CD4-positive, alpha-beta memory T cell (primary cell): ENCODE measurements at regions of chr2 and their contacts with region 1.

Region 1: DNA sequence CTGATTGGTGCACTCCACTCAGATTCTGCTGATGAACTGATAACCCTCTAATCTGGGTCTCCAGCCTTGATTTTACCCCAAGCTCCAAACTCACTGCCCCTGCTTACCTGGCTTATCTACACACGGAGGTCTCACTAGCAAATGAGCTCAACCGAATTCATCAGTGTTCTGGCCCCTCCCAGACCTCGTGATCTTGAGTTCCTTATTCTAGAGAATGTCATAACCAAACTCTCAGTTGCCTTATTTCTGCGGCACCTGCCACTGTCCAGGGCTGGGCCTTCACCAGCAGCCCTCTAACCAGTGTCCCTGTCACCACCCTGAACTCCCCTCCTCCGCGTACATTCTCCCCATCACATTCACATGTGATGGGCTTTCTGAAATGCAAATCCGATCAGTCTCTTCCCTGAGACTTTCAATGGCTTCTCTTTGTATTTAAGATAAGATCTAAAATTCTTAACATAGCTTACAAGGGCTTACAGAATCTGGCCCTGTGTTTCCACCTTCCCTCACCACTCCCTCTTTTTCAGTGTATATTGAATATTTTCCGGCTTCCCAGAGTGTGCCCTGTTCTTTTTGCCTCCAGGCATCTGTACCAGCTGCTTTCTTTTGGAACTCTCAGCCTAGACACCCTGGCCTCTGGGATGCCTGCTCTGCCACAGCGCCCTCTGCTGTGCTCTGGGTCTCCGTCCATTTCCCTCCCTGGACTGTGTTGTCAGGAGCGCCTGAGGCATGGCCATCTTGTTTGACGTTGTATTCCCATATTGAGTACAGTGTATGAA is 31.1 kb downstream of the NAB1 start:
- DNase-seq: peak; percentile 49 to 70 (median 56)
- H3K4me3 ChIP-seq: no peak overlapping the region
- H3K4me3 Mint-ChIP-seq: peak overlapping the region in 5 of 8 donors; percentile 16 to 84 (median 36)
- H3K27ac ChIP-seq: no peak overlapping the region
- H3K27ac Mint-ChIP-seq: peak overlapping the region; percentile 19 to 94 (median 88)
- H3K4me1 ChIP-seq: peaks cover 42% of the 10 kb centered on the region
- H3K4me1 Mint-ChIP-seq: peaks cover 36 to 44% (median 40%) of the 10 kb centered on the region in 4 donors
- H3K27me3 ChIP-seq: no peaks in the 10 kb centered on the region
- H3K27me3 Mint-ChIP-seq: no peaks in the 10 kb centered on the region

Region 2: GRCh38 chr2:190088917-190089316 is 591.1 kb before region 1 on chr2:
- CTCF ChIA-PET with region 1: interaction called, 10 read pairs
- POLR2A ChIA-PET with region 1: interaction called, 3 read pairs
- intact Hi-C with region 1: loop called (anchors 1 kb)
- DNase-seq: peak in 4 of 5 donors; percentile 42 to 53 (median 46)
- H3K4me3 ChIP-seq: no peak overlapping the region
- H3K4me3 Mint-ChIP-seq: no peak overlapping the region
- H3K27ac ChIP-seq: no peak overlapping the region
- H3K27ac Mint-ChIP-seq: no peak overlapping the region
- H3K4me1 ChIP-seq: no peaks in the 10 kb centered on the region
- H3K4me1 Mint-ChIP-seq: no peaks in the 10 kb centered on the region
- H3K27me3 ChIP-seq: no peaks in the 10 kb centered on the region
- H3K27me3 Mint-ChIP-seq: no peaks in the 10 kb centered on the region

Region 3: GRCh38 chr2:190382851-190383250 is 297.2 kb before region 1 on chr2:
- CTCF ChIA-PET with region 1: interaction called, 125 read pairs
- POLR2A ChIA-PET with region 1: no interaction called
- intact Hi-C with region 1: loop called (anchors 1 kb)
- DNase-seq: peak; percentile 50 to 66 (median 61)
- H3K4me3 ChIP-seq: no peak overlapping the region
- H3K4me3 Mint-ChIP-seq: no peak overlapping the region
- H3K27ac ChIP-seq: no peak overlapping the region
- H3K27ac Mint-ChIP-seq: no peak overlapping the region
- H3K4me1 ChIP-seq: no peaks in the 10 kb centered on the region
- H3K4me1 Mint-ChIP-seq: peaks cover 0 to 3% (median 0%) of the 10 kb centered on the region in 4 donors
- H3K27me3 ChIP-seq: no peaks in the 10 kb centered on the region
- H3K27me3 Mint-ChIP-seq: peaks cover 0 to 1% of the 10 kb centered on the region in 2 donors

Region 4: DNA sequence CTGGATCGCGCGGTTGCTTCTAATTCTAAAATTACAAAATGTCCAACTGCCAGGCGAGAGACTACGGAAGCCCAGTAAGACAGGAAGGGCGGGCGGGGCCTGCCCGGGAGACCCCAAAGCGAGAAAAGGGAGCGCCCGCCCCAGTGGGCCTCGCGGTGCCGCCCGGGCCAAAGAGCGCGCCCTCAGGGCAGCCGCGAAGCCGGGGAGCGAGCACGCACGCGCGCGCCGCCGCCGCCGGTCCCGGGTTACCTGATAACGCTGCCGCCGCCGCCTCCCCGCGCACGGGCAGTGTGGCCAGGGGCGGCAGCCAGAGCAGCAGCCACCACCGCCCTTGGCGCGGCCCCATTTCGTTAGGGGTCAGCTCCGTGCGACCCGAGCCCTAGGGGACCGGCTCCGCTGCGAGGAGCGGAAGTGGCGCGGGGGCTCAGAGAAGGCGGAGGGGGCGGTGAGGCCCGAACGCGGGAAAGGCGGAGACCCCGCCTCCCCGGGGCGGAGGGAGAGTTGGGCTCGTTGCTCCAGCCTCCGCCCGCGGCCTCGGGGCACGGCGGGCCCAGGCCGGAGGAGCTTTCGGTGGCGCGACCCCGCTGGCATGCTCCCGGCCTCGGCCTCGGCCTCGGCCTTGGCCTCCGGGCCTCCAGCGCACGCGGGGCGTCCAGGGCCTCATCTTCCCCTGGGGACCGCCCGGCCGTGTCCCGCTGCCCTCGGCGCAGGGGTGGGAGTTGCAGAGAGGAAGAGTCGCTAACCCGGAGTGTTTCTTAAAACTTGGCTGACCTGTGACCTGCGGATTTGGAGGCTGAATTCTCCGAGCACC is 145.5 kb before region 1 on chr2 and contains the start of gene NEMP2:
- CTCF ChIA-PET with region 1: interaction called, 15 read pairs
- POLR2A ChIA-PET with region 1: interaction called, 14 read pairs
- intact Hi-C with region 1: no loop called
- DNase-seq: peak; percentile 75 to 87 (median 81)
- H3K4me3 ChIP-seq: peak within 1 kb of the TSS; percentile 82 to 89
- H3K4me3 Mint-ChIP-seq: peak within 1 kb of the TSS; percentile 94 to 99 (median 98)
- H3K27ac ChIP-seq: peak within 1 kb of the TSS; percentile 87
- H3K27ac Mint-ChIP-seq: peak within 1 kb of the TSS; percentile 99 to 100 (median 100)
- H3K4me1 ChIP-seq: peaks cover 46% of the 10 kb centered on the region
- H3K4me1 Mint-ChIP-seq: peaks cover 42 to 66% (median 52%) of the 10 kb centered on the region in 4 donors
- H3K27me3 ChIP-seq: no peaks in the 10 kb centered on the region
- H3K27me3 Mint-ChIP-seq: no peaks in the 10 kb centered on the region
- total RNA-seq, gene NEMP2: 20.7 to 21.2 TPM

Region 5: GRCh38 chr2:190648289-190649034 is 31.5 kb before region 1 on chr2:
- CTCF ChIA-PET with region 1: interaction called, 51 read pairs
- POLR2A ChIA-PET with region 1: interaction called, 11 read pairs
- intact Hi-C with region 1: loop called (anchors 2 kb)
- DNase-seq: peak; percentile 91 to 94 (median 92)
- H3K4me3 ChIP-seq: peak overlapping the region; percentile 31 to 57
- H3K4me3 Mint-ChIP-seq: peak overlapping the region; percentile 78 to 91 (median 85)
- H3K27ac ChIP-seq: peak overlapping the region; percentile 72
- H3K27ac Mint-ChIP-seq: peak overlapping the region; percentile 90 to 96 (median 93)
- H3K4me1 ChIP-seq: peaks cover 38% of the 10 kb centered on the region
- H3K4me1 Mint-ChIP-seq: peaks cover 19 to 49% (median 29%) of the 10 kb centered on the region in 4 donors
- H3K27me3 ChIP-seq: no peaks in the 10 kb centered on the region
- H3K27me3 Mint-ChIP-seq: no peaks in the 10 kb centered on the region

Region 6: DNA sequence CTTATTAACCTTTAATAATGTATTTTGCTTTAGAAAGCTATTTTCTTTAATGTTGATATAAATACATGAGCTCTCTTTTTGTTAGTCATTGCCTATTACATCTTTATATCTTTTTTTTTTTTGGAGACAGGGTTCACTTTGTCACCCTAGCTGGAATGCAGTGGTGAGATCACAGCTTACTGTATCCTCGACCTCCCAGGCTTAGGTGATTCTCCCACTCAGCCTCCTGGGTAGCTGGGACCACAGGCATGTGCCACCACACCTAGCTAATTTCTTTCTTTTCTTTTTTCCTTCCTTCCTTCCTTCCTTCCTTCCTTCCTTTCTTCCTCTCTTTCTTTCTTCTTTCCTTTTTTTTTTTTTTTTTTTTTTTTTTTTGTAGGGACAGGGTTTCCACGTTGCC is 15.8 kb before region 1 on chr2:
- CTCF ChIA-PET with region 1: interaction called, 47 read pairs
- POLR2A ChIA-PET with region 1: interaction called, 3 read pairs
- intact Hi-C with region 1: no loop called
- DNase-seq: no peak
- H3K4me3 ChIP-seq: no peak overlapping the region
- H3K4me3 Mint-ChIP-seq: no peak overlapping the region
- H3K27ac ChIP-seq: no peak overlapping the region
- H3K27ac Mint-ChIP-seq: peak overlapping the region in 4 of 7 donors; percentile 17 to 53 (median 36)
- H3K4me1 ChIP-seq: peaks cover 33% of the 10 kb centered on the region
- H3K4me1 Mint-ChIP-seq: peaks cover 18 to 31% (median 25%) of the 10 kb centered on the region in 4 donors
- H3K27me3 ChIP-seq: no peaks in the 10 kb centered on the region
- H3K27me3 Mint-ChIP-seq: no peaks in the 10 kb centered on the region

Region 7: DNA sequence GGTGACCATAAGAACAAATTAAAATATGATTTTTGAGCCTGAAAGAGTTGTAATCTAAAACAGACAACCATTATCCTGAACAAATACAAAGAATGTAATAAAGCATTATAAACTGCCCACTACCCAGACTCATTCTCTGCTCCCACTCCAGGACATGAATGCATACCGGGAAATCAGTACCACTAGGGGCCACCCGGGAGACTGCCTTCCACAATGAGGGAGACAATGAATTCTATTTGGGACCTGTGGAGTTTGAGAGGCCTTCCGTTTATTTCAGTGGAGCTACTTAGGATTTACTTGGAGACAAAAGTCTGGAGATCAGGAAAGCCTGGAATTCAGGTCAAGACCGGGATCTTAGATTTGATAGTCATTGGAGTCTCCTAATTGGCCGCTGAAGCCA is 18.9 kb after region 1 on chr2:
- CTCF ChIA-PET with region 1: interaction called, 26 read pairs
- POLR2A ChIA-PET with region 1: no interaction called
- intact Hi-C with region 1: no loop called
- DNase-seq: no peak
- H3K4me3 ChIP-seq: no peak overlapping the region
- H3K4me3 Mint-ChIP-seq: no peak overlapping the region
- H3K27ac ChIP-seq: no peak overlapping the region
- H3K27ac Mint-ChIP-seq: no peak overlapping the region
- H3K4me1 ChIP-seq: no peaks in the 10 kb centered on the region
- H3K4me1 Mint-ChIP-seq: peaks cover 0 to 8% (median under 1%) of the 10 kb centered on the region in 4 donors
- H3K27me3 ChIP-seq: no peaks in the 10 kb centered on the region
- H3K27me3 Mint-ChIP-seq: no peaks in the 10 kb centered on the region